ENCODE measurements at regions of chr1 and their contacts with region 1.

Region 1: DNA sequence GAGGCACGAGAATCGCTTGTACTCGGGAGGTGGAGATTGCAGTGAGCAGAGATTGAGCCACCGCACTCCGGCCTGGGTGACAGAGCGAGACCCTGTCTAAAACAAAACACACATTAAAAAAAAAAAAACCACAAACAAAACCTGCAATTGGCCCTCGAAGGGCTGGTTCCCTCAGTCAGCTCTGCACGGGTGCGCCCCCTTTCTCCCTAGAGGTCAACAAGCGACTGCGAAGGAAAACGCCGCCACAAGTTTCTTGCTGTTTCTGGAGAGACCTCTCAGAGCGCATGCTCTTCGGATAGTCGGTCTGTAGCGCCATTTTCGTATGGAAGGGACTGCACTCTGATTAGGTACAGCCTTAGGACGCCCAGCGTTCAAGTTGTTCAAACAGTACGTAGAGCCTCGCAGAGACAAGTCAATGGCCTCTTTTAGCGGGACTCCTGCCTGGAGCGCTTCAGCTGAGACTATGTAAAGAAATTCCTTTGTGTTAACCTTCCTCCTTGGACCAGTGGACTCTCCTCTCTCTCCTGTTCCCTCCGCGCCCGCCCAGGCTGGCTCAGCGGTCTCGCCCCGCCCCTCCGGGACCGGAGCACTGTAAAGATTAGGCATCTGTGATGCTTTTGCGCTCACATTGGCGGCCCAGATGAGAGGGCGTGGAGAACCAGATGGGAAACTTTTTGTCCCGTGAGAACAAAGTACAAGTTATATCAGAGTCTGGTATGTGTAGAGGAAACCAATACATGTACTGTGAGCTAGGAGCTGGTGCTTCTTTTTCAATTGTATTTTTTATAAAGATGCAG is 1.0 kb upstream of the CDC14A start:
- DNase-seq: peak; percentile 91
- ATAC-seq: peak; percentile 67
- H3K4me3 Mint-ChIP-seq: peak overlapping the region; percentile 97
- H3K27ac Mint-ChIP-seq: peak overlapping the region; percentile 98
- H3K4me1 Mint-ChIP-seq: peaks cover 28% of the 10 kb centered on the region
- H3K27me3 Mint-ChIP-seq: no peaks in the 10 kb centered on the region
- CTCF ChIP-seq: peak; percentile 1

Region 2: GRCh38 chr1:99808391-99809115 is 542.7 kb before region 1 on chr1:
- CTCF ChIA-PET with region 1: no interaction called
- POLR2A ChIA-PET with region 1: no interaction called
- intact Hi-C with region 1: loop called (anchors 10 kb)
- DNase-seq: peak; percentile 45
- ATAC-seq: peak; percentile 84
- H3K4me3 Mint-ChIP-seq: peak overlapping the region; percentile 5
- H3K27ac Mint-ChIP-seq: peak overlapping the region; percentile 58
- H3K4me1 Mint-ChIP-seq: peaks cover 18% of the 10 kb centered on the region
- H3K27me3 Mint-ChIP-seq: peaks cover 13% of the 10 kb centered on the region
- CTCF ChIP-seq: peak; percentile 77

Region 3: GRCh38 chr1:100265931-100266740 is 85.2 kb before region 1 on chr1 and contains the start of gene RTCA:
- CTCF ChIA-PET with region 1: interaction called, 6 read pairs
- POLR2A ChIA-PET with region 1: interaction called, 19 read pairs
- intact Hi-C with region 1: loop called (anchors 5 kb)
- DNase-seq: peak; percentile 96
- ATAC-seq: peak; percentile 95
- H3K4me3 Mint-ChIP-seq: peak within 1 kb of the TSS; percentile 97
- H3K27ac Mint-ChIP-seq: peak within 1 kb of the TSS; percentile 98
- H3K4me1 Mint-ChIP-seq: peaks cover 35% of the 10 kb centered on the region
- H3K27me3 Mint-ChIP-seq: no peaks in the 10 kb centered on the region
- CTCF ChIP-seq: no peak
- total RNA-seq, gene RTCA: 44.7 to 46.0 TPM

Region 4: GRCh38 chr1:100328133-100328532 is 23.2 kb before region 1 on chr1:
- CTCF ChIA-PET with region 1: no interaction called
- POLR2A ChIA-PET with region 1: no interaction called
- intact Hi-C with region 1: no loop called
- DNase-seq: no peak
- ATAC-seq: no peak
- H3K4me3 Mint-ChIP-seq: no peak overlapping the region
- H3K27ac Mint-ChIP-seq: no peak overlapping the region
- H3K4me1 Mint-ChIP-seq: peaks cover 3% of the 10 kb centered on the region
- H3K27me3 Mint-ChIP-seq: no peaks in the 10 kb centered on the region
- CTCF ChIP-seq: no peak

Region 5: GRCh38 chr1:100400404-100400803 is 49.1 kb after region 1 on chr1:
- CTCF ChIA-PET with region 1: interaction called, 3 read pairs
- POLR2A ChIA-PET with region 1: interaction called, 9 read pairs
- intact Hi-C with region 1: loop called (anchors 5 kb)
- DNase-seq: peak; percentile 76
- ATAC-seq: peak; percentile 68
- H3K4me3 Mint-ChIP-seq: peak overlapping the region; percentile 63
- H3K27ac Mint-ChIP-seq: peak overlapping the region; percentile 97
- H3K4me1 Mint-ChIP-seq: peaks cover 78% of the 10 kb centered on the region
- H3K27me3 Mint-ChIP-seq: no peaks in the 10 kb centered on the region
- CTCF ChIP-seq: no peak

Region 6: DNA sequence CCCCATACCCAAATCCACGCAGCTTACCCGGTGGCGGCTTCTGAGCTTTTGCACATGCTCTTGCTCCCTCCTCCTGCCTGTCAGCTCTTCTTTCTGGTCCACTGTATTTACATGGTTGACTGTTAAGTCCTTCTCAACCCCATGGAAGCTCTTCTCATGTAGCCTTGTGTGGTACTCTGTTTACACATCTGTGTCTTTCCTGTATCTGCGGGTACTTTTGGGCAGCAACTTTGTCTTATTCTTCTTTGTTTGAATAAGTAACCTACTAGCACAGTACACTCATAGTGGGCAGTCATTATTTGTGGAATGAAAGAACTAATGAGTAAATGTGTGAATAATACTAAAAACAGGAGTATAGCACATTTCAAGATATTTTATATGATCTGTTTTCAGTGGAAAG is 98.2 kb after region 1 on chr1:
- CTCF ChIA-PET with region 1: interaction called, 77 read pairs
- POLR2A ChIA-PET with region 1: interaction called, 14 read pairs
- intact Hi-C with region 1: loop called (anchors 5 kb)
- DNase-seq: peak; percentile 17
- ATAC-seq: peak; percentile 60
- H3K4me3 Mint-ChIP-seq: peak overlapping the region; percentile 55
- H3K27ac Mint-ChIP-seq: peak overlapping the region; percentile 84
- H3K4me1 Mint-ChIP-seq: peaks cover 78% of the 10 kb centered on the region
- H3K27me3 Mint-ChIP-seq: no peaks in the 10 kb centered on the region
- CTCF ChIP-seq: no peak

Measured in activated CD8-positive, alpha-beta T cell treated with anti-CD3 and anti-CD28 coated beads for 36 hours (primary cell).